Head of caudate nucleus (tissue), 42 donors: ENCODE measurements at regions of chr1 and their contacts with region 1.

Region 1: GRCh38 chr1:9196129-9197040 is 38.2 kb upstream of the H6PD start:
- DNase-seq: peak; percentile 67 to 92 (median 83)

Region 2: GRCh38 chr1:9110669-9111356 is 85.6 kb before region 1 on chr1:
- intact Hi-C with region 1: loop called (anchors 5 kb)
- DNase-seq: peak; percentile 76 to 96 (median 92)

Region 3: DNA sequence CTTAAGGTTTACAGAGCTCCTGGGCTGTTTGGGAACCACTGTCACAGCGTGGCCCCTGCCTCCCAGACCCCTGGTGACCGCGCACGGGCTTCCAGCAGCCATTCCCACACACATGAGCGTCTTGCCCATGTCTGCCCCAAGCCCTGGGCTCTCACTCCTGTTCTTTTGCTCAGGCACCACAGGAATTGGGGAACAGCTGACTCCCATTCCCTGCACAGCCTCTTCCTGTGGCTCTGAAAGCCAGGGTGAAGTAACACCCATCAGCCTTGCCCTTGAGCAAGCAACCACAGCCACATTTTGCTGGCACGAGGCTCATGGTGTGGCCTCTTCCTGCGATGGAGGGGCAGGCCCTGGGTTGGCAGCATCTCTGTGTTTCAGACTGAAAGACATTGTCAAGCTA is 53.1 kb before region 1 on chr1:
- intact Hi-C with region 1: loop called (anchors 2 kb)
- DNase-seq: no peak

Region 4: GRCh38 chr1:9211291-9211811 is 15.0 kb after region 1 on chr1:
- intact Hi-C with region 1: no loop called
- DNase-seq: no peak